ENCODE measurements at regions of chr20 and their contacts with region 1.

Region 1: DNA sequence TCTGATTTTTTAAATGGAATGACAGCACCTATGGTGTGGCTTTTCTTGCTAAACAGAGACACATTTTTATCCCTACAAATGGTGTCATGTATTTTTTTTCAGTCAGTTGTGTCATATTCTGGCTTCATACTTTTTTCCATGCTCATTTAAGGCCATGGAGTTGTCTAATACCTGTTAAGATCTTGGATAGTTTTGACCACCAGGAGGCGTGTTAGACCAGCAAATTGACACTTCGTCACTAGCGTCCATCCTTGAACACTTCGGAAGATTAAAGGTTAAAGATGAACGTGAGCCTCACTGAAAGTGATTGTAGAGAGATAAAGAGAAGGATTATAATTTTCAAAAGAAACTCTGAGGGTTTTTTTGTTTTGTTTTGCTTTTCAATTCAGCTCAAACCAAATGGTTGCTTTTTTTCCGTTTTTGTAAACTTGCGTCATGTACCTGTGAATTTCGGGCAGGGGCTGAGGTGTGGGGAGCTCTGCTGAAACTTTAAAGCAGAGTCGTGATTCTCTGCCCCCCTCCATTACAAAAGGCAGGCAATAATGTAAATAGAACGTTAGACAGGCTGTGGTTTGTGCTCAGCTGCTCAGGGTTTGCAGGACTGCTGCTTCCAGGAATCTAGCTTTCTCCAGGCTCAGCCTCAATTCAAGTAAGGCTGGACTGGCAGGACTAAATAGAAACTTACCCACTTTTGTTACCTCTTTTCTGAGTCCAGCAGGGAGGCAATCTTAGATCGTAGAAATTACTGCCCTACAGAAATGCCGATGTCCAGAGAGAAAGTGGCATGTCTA is 245.1 kb downstream of the FOXA2 start:
- DNase-seq: peak in 23 of 42 donors; percentile 16 to 75 (median 47)

Region 2: GRCh38 chr20:22546344-22546743 is 207.1 kb after region 1 on chr20:
- intact Hi-C with region 1: no loop called
- DNase-seq: no peak

Region 3: GRCh38 chr20:22583773-22584521 is 244.7 kb after region 1 on chr20:
- intact Hi-C with region 1: loop called (anchors 5 kb)
- DNase-seq: no peak

Region 4: DNA sequence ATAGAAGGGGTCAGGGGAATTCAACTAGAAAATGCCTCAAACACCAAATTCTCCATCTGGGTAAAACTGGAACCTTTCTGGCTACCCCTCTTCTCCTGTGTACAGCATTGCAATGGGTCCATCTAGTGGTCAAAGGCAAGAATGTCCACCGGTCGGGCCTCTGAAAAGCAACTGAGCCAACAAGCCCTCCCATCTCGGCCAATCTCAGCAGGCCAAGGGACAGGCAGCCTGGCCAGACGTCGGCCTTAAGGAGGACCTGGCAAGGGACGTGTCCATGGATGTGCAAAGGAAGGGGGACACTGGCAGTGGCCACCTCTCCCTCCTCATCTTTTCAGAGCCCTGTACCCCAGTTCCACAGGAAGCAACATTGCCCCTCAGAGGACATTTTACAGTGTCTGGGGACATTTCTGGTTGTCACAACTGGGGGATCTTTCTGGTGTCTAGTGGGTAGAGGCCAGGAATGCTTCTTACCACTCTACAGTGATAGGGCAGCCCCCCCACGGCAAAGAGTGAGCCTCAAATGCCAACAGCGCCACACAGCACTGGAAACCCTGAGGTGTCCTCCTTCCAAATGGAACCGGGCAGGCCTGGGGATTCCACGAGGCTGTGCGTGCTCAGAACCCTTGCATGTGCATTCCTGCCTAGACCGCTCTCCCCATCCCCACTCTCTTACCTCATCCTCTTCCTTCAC is 344.9 kb after region 1 on chr20:
- intact Hi-C with region 1: loop called (anchors 5 kb)
- DNase-seq: peak; percentile 23 to 85 (median 65)

Measured in head of caudate nucleus (tissue), 42 donors.